MCF 10A (cell line): ENCODE measurements at regions of chr11 and their contacts with region 1.

Region 1: GRCh38 chr11:20127671-20128527 is 32.4 kb downstream of the DBX1 start:
- DNase-seq: peak; percentile 74
- H3K4me3 Mint-ChIP-seq: no peak overlapping the region
- H3K27ac Mint-ChIP-seq: peak overlapping the region; percentile 23
- H3K4me1 Mint-ChIP-seq: peaks cover 25% of the 10 kb centered on the region
- H3K27me3 Mint-ChIP-seq: no peaks in the 10 kb centered on the region
- CTCF ChIP-seq: peak; percentile 81

Region 2: DNA sequence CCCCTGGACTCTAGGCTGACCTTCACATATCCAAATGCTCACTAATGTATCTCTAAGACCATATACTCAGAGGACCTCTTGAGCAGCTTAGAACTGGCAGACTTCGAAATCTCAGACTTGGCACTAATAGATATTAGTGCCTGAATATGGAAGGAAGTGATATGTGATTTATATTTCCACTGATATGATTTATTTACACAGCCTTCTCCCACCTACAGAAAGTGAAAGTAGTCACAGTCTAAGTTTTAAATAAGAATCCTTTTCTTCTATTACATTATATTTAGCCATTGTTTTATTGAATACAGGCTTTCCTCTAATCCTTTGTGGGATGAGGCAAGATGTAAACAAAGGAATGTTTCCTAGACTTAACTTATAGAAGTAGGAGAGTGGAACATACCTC is 422.0 kb before region 1 on chr11:
- CTCF ChIA-PET with region 1: no interaction called
- POLR2A ChIA-PET with region 1: no interaction called
- intact Hi-C with region 1: no loop called
- DNase-seq: no peak
- H3K4me3 Mint-ChIP-seq: no peak overlapping the region
- H3K27ac Mint-ChIP-seq: no peak overlapping the region
- H3K4me1 Mint-ChIP-seq: peaks cover 4% of the 10 kb centered on the region
- H3K27me3 Mint-ChIP-seq: no peaks in the 10 kb centered on the region
- CTCF ChIP-seq: no peak

Region 3: GRCh38 chr11:19919050-19919561 is 208.8 kb before region 1 on chr11:
- CTCF ChIA-PET with region 1: interaction called, 10 read pairs
- POLR2A ChIA-PET with region 1: no interaction called
- intact Hi-C with region 1: no loop called
- DNase-seq: peak; percentile 98
- H3K4me3 Mint-ChIP-seq: peak overlapping the region; percentile 63
- H3K27ac Mint-ChIP-seq: peak overlapping the region; percentile 94
- H3K4me1 Mint-ChIP-seq: peaks cover 32% of the 10 kb centered on the region
- H3K27me3 Mint-ChIP-seq: no peaks in the 10 kb centered on the region
- CTCF ChIP-seq: no peak

Region 4: DNA sequence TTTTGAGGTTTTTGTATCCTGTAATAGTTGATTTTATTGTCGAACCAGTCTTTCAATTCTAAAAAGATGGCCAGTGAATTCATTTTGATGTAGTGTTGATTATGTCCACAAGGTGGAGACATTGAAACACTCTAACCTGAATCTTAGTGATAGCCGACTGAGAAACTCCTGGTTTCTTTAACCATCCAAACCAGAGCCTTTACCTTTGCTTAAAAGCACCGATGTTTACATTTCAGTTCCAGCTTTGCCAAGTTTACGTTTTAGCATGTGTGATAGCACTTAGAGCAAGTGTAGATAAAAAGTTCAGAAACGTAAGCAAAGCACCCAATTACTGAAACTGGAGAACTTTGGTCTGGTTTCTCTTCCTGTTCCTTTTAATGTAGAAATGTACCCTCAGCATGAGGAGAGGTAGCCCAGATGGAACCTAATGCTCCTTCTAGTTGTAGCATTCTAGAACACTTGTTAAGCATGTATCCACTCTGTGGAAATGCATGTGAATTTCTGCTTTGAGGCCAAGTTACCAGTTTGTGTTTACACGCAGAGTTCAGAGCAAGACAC is 176.3 kb before region 1 on chr11:
- CTCF ChIA-PET with region 1: interaction called, 54 read pairs
- POLR2A ChIA-PET with region 1: interaction called, 5 read pairs
- intact Hi-C with region 1: loop called (anchors 1 kb)
- DNase-seq: peak; percentile 76
- H3K4me3 Mint-ChIP-seq: peak overlapping the region; percentile 28
- H3K27ac Mint-ChIP-seq: peak overlapping the region; percentile 64
- H3K4me1 Mint-ChIP-seq: peaks cover 41% of the 10 kb centered on the region
- H3K27me3 Mint-ChIP-seq: no peaks in the 10 kb centered on the region
- CTCF ChIP-seq: peak; percentile 60

Region 5: GRCh38 chr11:20105427-20105826 is 22.5 kb before region 1 on chr11:
- CTCF ChIA-PET with region 1: interaction called, 115 read pairs
- POLR2A ChIA-PET with region 1: no interaction called
- intact Hi-C with region 1: no loop called
- DNase-seq: no peak
- H3K4me3 Mint-ChIP-seq: no peak overlapping the region
- H3K27ac Mint-ChIP-seq: no peak overlapping the region
- H3K4me1 Mint-ChIP-seq: peaks cover 15% of the 10 kb centered on the region
- H3K27me3 Mint-ChIP-seq: no peaks in the 10 kb centered on the region
- CTCF ChIP-seq: no peak

Region 6: DNA sequence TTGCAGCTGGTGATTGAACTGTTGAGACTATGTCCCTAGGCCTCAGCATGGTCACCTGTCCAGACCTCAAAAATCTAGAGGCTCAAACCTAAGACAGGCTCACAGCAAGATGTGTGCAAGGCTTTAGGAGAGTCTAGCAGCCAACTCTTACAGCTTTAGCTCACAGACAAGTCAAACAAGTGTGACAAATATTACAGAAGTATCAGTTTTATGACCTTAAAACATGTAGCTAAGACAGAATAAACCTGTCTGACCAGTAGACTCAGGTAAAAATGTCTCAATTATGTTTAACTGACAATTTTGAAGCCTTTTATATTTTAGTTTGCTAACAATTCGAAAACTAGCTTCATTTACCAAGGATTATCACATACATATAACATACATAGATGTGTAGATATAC is 155.6 kb after region 1 on chr11:
- CTCF ChIA-PET with region 1: no interaction called
- POLR2A ChIA-PET with region 1: no interaction called
- intact Hi-C with region 1: no loop called
- DNase-seq: no peak
- H3K4me3 Mint-ChIP-seq: no peak overlapping the region
- H3K27ac Mint-ChIP-seq: no peak overlapping the region
- H3K4me1 Mint-ChIP-seq: peaks cover 6% of the 10 kb centered on the region
- H3K27me3 Mint-ChIP-seq: peaks cover 75% of the 10 kb centered on the region
- CTCF ChIP-seq: no peak

Region 7: DNA sequence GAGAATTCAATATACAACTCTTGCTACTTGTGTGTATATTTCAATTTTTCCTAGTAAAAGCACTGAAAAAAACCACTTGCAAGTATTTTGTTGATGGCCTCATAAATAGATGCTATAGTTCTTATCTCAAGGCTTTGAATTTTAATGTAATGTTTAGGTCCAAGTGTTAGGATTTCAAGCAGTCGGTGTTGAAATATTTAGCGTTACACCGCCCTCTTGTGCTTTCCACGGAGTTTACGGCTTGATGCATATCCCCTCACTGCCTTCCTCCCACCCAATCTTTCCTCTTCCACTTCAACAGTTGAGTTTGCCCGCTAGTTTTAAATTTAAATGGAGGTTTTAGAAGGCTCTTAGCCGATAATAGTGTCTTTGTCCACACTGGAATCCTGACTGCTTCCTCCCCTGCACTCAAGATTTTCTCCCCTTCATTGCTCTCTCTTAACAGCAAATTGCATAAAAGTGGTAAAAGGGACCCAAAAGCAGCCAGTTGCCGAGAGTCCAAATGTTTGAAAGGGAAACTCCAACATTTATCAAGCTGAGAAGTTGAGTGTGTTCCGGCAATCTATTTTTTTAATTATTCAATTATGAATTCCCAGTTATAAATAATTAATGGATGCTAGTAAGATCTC is 209.7 kb after region 1 on chr11:
- CTCF ChIA-PET with region 1: interaction called, 21 read pairs
- POLR2A ChIA-PET with region 1: no interaction called
- intact Hi-C with region 1: loop called (anchors 1 kb)
- DNase-seq: peak; percentile 46
- H3K4me3 Mint-ChIP-seq: no peak overlapping the region
- H3K27ac Mint-ChIP-seq: no peak overlapping the region
- H3K4me1 Mint-ChIP-seq: no peaks in the 10 kb centered on the region
- H3K27me3 Mint-ChIP-seq: peaks cover 97% of the 10 kb centered on the region
- CTCF ChIP-seq: peak; percentile 42

Region 8: DNA sequence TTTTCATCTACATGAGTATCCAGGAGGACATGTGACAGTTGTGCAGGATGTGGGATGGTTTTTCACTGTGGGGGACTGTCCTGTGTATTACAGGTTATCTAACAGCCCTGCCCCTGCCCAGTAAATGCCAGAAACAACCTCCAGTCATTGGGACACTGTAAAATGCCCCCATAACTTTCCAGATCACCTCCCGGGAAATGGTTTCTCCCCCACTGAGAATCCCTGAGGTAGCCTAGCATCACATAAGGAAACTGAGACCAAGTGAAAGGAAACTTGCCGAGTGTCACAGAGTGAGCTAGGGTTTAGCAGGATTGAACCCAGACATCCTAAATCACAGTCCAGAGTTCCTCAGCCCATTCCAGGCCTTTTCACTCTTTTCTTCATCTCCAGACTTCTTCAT is 423.2 kb after region 1 on chr11:
- CTCF ChIA-PET with region 1: no interaction called
- POLR2A ChIA-PET with region 1: no interaction called
- intact Hi-C with region 1: no loop called
- DNase-seq: no peak
- H3K4me3 Mint-ChIP-seq: no peak overlapping the region
- H3K27ac Mint-ChIP-seq: no peak overlapping the region
- H3K4me1 Mint-ChIP-seq: no peaks in the 10 kb centered on the region
- H3K27me3 Mint-ChIP-seq: no peaks in the 10 kb centered on the region
- CTCF ChIP-seq: no peak